Left cardiac atrium (tissue), 4 donors: ENCODE measurements at regions of chr2 and their contacts with region 1.

Region 1: GRCh38 chr2:207529330-207530159 is at the start of gene CREB1:
- DNase-seq: peak; percentile 98
- ATAC-seq: peak; percentile 96 to 97
- total RNA-seq, gene CREB1: 40.4 to 40.6 TPM

Region 2: DNA sequence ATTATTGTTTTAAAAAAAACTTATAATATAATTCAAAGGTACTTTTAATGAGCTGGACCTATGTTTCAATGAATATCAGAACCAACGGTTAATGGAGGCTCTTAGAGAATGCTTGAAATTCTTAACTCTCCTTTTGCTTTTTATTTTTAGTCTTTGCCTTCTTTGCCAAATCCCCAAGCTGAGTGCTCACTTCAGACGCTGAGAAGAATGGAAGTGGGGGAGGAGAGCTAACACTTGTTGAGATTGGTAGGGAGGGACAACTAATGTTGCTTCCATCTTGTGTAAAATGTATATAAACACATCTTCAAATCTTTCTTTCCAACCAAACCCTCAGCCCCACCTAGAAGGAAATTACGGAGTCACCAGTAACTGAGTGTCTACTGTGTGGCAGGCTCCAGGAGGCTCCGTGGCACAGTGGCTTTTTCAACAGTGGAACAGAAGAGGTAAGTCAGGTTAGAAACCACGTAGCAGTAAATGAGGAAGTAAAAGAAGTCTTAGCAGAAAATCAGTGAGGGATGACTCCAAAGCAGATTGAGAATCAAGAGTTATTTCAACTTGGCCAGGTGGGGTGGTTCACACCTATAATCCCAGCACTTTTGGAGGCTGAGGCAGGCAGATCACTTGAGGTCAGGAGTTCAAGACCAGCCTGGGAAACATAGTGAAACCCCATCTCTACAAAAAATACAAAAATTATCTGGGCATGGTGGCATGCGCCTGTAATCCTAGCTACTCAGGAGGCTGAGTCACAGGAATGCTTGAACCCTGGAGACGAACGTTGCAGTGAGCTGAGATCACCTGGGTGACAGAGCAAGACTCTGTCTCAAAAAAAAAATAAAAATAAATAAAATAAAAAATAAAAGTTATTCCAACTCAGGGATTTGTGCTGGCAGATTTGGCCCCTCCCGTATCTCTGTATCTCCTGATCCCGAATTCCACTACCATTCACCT is 44.8 kb before region 1 on chr2:
- intact Hi-C with region 1: loop called in 1 of 2 experiments (anchors 5 kb)
- DNase-seq: no peak
- ATAC-seq: peak; percentile 28 to 67